ENCODE measurements at regions of chr7 and their contacts with region 1.

Region 1: DNA sequence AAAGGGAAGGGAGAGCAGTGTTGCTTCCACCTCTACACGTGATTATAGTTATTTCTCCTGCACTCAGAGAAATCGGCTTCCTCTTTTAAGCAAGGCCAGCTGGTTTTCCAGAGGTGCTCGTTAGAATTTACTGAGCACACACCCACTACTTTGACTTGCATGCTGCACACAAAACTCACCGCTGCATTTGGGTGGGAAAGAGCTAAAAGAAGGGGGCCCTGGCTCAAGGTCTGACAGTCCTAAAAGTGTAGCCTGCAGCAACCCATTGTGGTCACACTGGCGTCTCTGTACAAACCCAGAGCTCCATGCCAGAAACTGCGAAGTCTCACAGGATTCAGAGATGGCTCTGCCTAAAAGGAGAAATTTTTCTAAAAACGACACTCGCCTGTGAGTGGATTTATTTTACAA is 133.7 kb downstream of the SLC25A13 start:
- DNase-seq: no peak
- H3K4me3 ChIP-seq: no peak overlapping the region
- H3K27ac ChIP-seq: no peak overlapping the region
- H3K4me1 ChIP-seq: no peaks in the 10 kb centered on the region
- H3K27me3 ChIP-seq: no peaks in the 10 kb centered on the region
- CTCF ChIP-seq: no peak

Region 2: DNA sequence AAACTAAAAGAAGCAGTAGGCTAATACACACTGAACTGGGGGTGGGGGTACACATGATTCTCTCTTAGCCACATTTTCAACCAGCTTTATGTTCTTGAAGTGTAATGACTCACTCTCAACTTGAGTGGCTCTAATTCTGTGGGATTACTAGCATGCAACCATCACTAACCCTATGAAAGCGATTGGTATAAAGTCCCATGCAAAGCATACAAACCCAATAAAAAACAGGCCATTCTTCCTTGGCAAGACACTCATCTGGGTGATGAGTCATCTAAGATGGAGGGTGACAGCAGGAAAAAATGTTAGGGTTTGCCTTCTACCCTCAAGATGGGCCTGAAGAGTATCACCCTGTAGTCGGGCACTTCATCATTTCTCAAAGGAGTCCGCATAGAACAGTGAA is 777.1 kb before region 1 on chr7:
- CTCF ChIA-PET with region 1: no interaction called
- POLR2A ChIA-PET with region 1: no interaction called
- intact Hi-C with region 1: no loop called
- DNase-seq: no peak
- H3K4me3 ChIP-seq: no peak overlapping the region
- H3K27ac ChIP-seq: no peak overlapping the region
- H3K4me1 ChIP-seq: no peaks in the 10 kb centered on the region
- H3K27me3 ChIP-seq: no peaks in the 10 kb centered on the region
- CTCF ChIP-seq: no peak

Region 3: DNA sequence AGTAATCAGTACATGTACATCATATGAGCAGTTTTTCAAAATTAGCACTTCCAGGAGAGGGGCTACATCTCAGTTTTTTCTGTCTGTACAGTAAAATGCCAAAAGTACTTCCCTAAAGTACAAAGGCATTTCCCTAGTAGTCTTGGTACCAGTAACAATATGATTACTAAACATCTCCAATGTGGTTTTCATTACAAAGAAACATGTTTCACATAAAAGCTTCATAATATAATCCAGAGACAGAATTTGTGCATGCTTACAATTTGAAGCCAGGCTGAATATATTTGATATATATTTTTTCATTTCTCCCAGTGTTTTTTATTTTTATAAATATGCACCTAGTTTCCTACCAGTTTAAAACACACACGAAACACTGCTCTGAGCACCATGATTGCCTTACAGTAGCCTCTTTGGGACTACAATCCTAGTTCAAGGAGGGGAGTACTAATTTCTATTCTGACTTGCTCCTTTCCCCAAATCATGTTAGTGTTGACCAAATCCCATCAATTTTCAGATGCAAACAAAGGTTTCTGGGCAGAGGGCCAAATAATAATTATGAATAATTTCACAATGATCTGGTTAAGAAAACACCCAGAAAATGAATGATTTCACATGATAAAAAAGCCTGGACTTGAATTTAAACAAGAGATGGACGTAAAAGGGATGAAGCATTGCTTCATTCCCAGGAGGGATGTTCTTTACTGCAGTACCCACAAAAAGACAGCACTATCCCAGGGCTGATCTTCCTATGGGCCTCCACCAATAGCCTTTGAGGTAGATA is 67.5 kb before region 1 on chr7:
- CTCF ChIA-PET with region 1: no interaction called
- POLR2A ChIA-PET with region 1: no interaction called
- intact Hi-C with region 1: no loop called
- DNase-seq: no peak
- H3K4me3 ChIP-seq: no peak overlapping the region
- H3K27ac ChIP-seq: no peak overlapping the region
- H3K4me1 ChIP-seq: no peaks in the 10 kb centered on the region
- H3K27me3 ChIP-seq: no peaks in the 10 kb centered on the region
- CTCF ChIP-seq: no peak

Region 4: GRCh38 chr7:96135271-96135670 is 52.9 kb before region 1 on chr7:
- CTCF ChIA-PET with region 1: no interaction called
- POLR2A ChIA-PET with region 1: no interaction called
- intact Hi-C with region 1: no loop called
- DNase-seq: peak; percentile 49 to 97
- H3K4me3 ChIP-seq: no peak overlapping the region
- H3K27ac ChIP-seq: peak overlapping the region; percentile 77
- H3K4me1 ChIP-seq: peaks cover 30% of the 10 kb centered on the region
- H3K27me3 ChIP-seq: no peaks in the 10 kb centered on the region
- CTCF ChIP-seq: no peak

Region 5: GRCh38 chr7:96266580-96266979 is 78.4 kb after region 1 on chr7:
- CTCF ChIA-PET with region 1: no interaction called
- POLR2A ChIA-PET with region 1: no interaction called
- intact Hi-C with region 1: no loop called
- DNase-seq: no peak
- H3K4me3 ChIP-seq: no peak overlapping the region
- H3K27ac ChIP-seq: no peak overlapping the region
- H3K4me1 ChIP-seq: no peaks in the 10 kb centered on the region
- H3K27me3 ChIP-seq: no peaks in the 10 kb centered on the region
- CTCF ChIP-seq: no peak

Region 6: GRCh38 chr7:96414931-96415292 is 226.7 kb after region 1 on chr7:
- CTCF ChIA-PET with region 1: no interaction called
- POLR2A ChIA-PET with region 1: no interaction called
- intact Hi-C with region 1: loop called (anchors 10 kb)
- DNase-seq: peak in 1 of 2 experiments; percentile 43
- H3K4me3 ChIP-seq: no peak overlapping the region
- H3K27ac ChIP-seq: no peak overlapping the region
- H3K4me1 ChIP-seq: peaks cover 10% of the 10 kb centered on the region
- H3K27me3 ChIP-seq: no peaks in the 10 kb centered on the region
- CTCF ChIP-seq: peak; percentile 85

Measured in PC-9 (cell line).